Ascending aorta (tissue), 2 donors: ENCODE measurements at regions of chr12 and their contacts with region 1.

Region 1: DNA sequence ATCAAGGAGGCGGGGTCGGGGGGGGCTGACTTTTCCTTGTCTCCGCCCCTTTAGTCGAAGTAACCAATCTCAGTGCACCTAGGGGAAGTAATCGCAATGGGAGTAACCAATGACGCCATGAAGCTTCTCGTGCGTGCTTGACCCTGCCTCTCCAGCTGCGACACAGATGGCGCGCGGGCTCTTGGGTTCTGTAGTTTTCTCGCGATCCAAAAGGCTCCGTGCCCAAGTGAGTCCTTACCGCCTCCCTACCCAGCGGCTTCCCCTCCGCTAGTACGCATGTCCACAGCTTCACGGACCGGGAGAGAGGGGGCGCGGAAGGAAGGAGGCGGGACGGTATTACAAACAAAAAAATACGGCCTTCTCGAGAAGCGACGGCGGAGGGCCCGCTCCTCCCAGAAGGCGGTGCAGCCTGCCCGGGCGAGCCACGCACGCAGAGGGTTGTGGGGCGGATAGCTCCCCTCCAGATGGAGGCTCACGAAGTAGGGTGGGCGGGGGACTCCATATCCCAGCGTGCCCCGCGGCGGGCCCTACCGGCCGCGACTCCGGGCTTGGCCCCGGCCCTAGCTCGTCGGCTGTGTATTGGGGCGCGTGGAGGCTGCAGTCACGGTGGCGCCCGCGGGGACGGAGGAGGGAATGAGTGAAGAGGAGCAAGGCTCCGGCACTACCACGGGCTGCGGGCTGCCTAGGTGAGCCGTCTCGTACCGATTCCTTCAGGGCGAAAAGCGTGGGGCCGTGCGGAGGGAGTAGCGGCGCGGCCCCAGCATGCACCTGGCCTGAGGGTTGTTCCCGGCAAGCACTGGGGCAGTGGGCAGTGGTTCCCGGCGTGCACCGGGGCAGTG is at the start of gene TARBP2:
- DNase-seq: peak; percentile 98 to 100
- H3K4me3 ChIP-seq: peak within 1 kb of the TSS; percentile 69 to 74
- H3K27ac ChIP-seq: peak within 1 kb of the TSS; percentile 94 to 98
- H3K4me1 ChIP-seq: peaks cover 23 to 38% of the 10 kb centered on the region in 2 donors
- H3K27me3 ChIP-seq: no peaks in the 10 kb centered on the region
- CTCF ChIP-seq: no peak
- total RNA-seq, gene TARBP2: 32.9 TPM

Region 2: GRCh38 chr12:53047221-53048042 is 453.6 kb before region 1 on chr12:
- intact Hi-C with region 1: loop called (anchors 5 kb)
- DNase-seq: peak in 1 of 2 donors; percentile 92
- H3K4me3 ChIP-seq: peak overlapping the region; percentile 91 to 93
- H3K27ac ChIP-seq: peak overlapping the region; percentile 99
- H3K4me1 ChIP-seq: peaks cover 13 to 46% of the 10 kb centered on the region in 2 donors
- H3K27me3 ChIP-seq: no peaks in the 10 kb centered on the region
- CTCF ChIP-seq: peak in 1 of 3 experiments; percentile 77

Region 3: DNA sequence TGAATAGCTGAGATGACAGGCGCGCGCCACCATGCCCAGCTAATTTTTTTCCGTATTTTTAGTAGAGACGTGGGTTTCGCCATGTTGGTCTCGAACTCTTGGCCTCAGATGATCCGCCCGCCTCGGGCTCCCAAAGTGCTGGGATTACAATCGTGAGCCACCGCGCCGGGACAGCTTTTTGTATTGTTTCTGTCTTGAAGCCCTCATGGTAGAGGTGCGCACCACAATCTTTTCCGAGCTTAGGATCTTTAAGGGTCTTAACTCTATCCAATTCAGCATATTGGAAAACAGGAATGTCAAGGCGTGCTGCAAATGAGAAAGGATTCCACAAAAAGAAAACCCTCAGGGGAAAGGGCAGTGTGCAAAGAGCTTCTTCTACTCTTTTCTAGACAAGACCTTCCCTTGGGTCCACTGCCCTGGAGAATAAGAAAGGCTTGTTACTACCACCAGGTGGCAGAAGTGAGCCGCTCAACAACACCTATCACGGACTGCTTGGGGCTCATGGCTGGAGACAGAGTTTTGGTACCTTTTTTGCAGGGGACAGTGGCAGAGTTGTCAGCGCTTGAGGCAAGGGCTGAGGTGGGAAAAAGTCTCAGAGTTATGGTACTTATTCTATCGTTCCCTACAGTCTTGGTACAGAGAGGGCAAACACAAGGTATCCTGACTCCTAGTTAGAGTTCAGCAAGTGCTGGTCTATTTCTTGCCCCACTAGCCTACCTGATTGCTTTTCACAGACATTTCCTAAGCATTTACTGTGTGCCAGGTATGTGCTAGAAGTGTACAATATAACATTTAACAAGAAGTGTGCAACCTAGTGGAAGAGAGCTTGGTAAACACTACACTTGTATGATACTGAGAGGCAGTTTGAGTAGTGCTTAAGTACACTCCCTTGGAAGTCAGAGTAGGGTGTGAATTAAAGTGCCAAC is 148.4 kb before region 1 on chr12:
- intact Hi-C with region 1: loop called (anchors 2 kb)
- DNase-seq: peak; percentile 24 to 90
- H3K4me3 ChIP-seq: no peak overlapping the region
- H3K27ac ChIP-seq: no peak overlapping the region
- H3K4me1 ChIP-seq: no peaks in the 10 kb centered on the region
- H3K27me3 ChIP-seq: no peaks in the 10 kb centered on the region
- CTCF ChIP-seq: peak; percentile 81 to 87 (median 86)

Region 4: GRCh38 chr12:53379389-53380103 is 121.4 kb before region 1 on chr12:
- intact Hi-C with region 1: loop called (anchors 2 kb)
- DNase-seq: peak; percentile 100
- H3K4me3 ChIP-seq: peak overlapping the region; percentile 86 to 87
- H3K27ac ChIP-seq: peak overlapping the region; percentile 95 to 99
- H3K4me1 ChIP-seq: peaks cover 23 to 37% of the 10 kb centered on the region in 2 donors
- H3K27me3 ChIP-seq: no peaks in the 10 kb centered on the region
- CTCF ChIP-seq: no peak

Region 5: GRCh38 chr12:53441040-53441833 is 59.8 kb before region 1 on chr12 and contains the start of gene PRR13:
- intact Hi-C with region 1: loop called (anchors 2 kb)
- DNase-seq: peak; percentile 98 to 100
- H3K4me3 ChIP-seq: peak within 1 kb of the TSS; percentile 69 to 74
- H3K27ac ChIP-seq: peak within 1 kb of the TSS; percentile 88 to 91
- H3K4me1 ChIP-seq: peaks cover 0 to 10% of the 10 kb centered on the region in 2 donors
- H3K27me3 ChIP-seq: no peaks in the 10 kb centered on the region
- CTCF ChIP-seq: no peak
- total RNA-seq, gene PRR13: 20.6 TPM

Region 6: GRCh38 chr12:53451661-53452158 is 49.3 kb before region 1 on chr12 and contains the start of gene PCBP2:
- intact Hi-C with region 1: loop called (anchors 1 kb)
- DNase-seq: peak; percentile 95 to 99
- H3K4me3 ChIP-seq: peak within 1 kb of the TSS; percentile 74 to 91
- H3K27ac ChIP-seq: peak within 1 kb of the TSS; percentile 91 to 97
- H3K4me1 ChIP-seq: peaks cover 10 to 13% of the 10 kb centered on the region in 2 donors
- H3K27me3 ChIP-seq: no peaks in the 10 kb centered on the region
- CTCF ChIP-seq: peak; percentile 87 to 95 (median 89)
- total RNA-seq, gene PCBP2: 354 TPM